Transverse colon (tissue), 4 donors: ENCODE measurements at regions of chr11 and their contacts with region 1.

Region 1: DNA sequence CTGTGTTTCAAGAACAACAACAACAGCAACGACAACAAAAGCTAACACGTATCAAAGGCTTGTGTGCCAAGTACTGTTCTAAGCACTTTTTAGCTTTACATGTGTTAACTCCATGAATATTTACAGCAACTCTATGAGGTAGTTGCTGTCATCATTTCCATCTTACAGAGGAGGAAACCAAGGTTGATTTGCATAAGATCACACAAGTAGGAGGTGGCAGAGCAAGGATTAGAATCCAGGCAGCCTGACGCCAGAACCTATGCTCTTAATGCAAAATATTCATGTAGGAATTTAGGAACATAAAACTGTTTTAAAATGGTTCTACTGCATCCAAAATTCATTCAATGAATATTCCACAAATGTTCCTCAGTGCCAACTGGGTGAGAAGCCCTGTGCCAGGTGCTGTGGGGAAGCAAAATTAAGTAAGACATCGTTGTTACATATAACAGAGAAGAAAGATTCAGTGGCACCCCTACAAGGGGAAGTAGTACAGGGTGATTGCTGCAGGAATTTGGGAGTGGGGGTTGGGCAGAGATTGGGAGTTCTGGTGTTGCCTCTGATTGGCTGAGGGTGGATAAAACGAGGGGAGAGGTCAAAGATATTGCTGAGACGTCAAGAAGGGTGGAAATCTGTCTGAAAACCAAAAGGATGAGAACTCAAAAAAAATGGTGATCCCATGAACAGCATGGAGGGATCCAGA is 86.1 kb upstream of the ARHGAP20 start:
- DNase-seq: no peak
- H3K4me3 ChIP-seq: no peak overlapping the region
- H3K27ac ChIP-seq: no peak overlapping the region
- H3K4me1 ChIP-seq: no peaks in the 10 kb centered on the region
- H3K27me3 ChIP-seq: no peaks in the 10 kb centered on the region
- CTCF ChIP-seq: no peak
- EP300 ChIP-seq: no peak
- POLR2A ChIP-seq: no peak

Region 2: DNA sequence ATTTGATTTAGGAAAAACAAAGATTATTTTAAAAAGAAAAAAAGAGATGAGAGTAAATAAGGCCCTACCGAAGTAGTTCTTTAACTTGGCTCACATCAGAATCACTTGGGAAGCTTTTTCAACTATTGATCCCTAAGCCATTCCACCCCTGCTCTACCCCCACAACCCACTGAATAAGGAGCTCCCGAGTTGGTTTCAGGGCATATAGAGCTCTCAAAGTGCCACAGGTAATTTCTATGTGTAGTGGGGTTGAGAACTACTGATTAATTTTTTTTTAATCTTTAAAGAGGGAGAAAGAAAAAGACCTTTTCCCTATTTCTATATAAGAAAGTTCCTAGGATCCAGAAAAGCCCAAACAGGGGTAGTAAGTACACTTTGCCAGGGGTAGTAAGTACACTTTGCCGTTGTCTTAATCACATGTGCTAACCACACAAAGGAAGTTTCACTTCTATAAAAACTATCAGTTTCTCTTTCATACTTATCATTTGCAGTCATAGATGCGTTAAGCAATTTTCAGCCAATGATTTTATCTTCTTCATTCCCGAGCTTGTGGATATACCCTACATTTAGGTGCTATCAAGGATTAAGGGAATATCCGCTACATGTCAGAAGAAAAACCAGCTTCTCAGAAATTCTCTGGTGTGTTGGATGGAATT is 813.6 kb before region 1 on chr11:
- in situ Hi-C with region 1: no loop called
- intact Hi-C with region 1: no loop called
- DNase-seq: no peak
- H3K4me3 ChIP-seq: no peak overlapping the region
- H3K27ac ChIP-seq: no peak overlapping the region
- H3K4me1 ChIP-seq: no peaks in the 10 kb centered on the region
- H3K27me3 ChIP-seq: no peaks in the 10 kb centered on the region
- CTCF ChIP-seq: no peak
- EP300 ChIP-seq: no peak
- POLR2A ChIP-seq: no peak

Region 3: DNA sequence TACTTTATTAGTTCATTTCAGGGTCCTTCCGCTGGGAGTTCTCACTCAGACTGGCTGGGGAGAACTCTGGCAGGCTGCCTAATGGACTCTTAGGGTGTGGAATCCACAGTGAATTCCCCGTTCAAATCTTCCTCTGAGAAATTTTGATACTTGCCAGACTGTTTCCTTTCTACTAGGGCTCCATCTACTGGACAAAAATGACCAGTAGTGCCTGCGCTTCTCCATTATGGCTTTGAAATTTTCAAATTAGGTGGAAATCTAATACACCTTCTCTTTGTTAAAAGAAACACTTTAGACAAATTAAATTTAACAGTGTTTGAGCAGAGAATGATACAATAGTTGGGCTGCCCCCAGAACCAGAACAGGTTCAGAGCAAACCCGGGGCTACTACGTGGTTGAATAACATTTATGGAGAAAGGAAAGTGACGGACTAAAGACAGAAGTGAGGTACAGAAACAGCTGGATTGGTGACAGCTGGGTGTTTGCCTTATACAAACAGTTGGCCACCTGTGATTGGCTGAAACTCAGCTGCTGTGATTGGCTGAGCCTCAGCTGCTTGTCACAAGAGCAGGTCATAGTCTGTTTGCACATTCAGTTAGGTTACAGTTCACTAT is 421.5 kb before region 1 on chr11:
- in situ Hi-C with region 1: no loop called
- intact Hi-C with region 1: no loop called
- DNase-seq: peak; percentile 68
- H3K4me3 ChIP-seq: peak overlapping the region in 1 of 4 donors; percentile 9
- H3K27ac ChIP-seq: peak overlapping the region in 3 of 4 donors; percentile 26 to 68 (median 48)
- H3K4me1 ChIP-seq: peaks cover 0 to 11% (median 9%) of the 10 kb centered on the region in 4 donors
- H3K27me3 ChIP-seq: no peaks in the 10 kb centered on the region
- CTCF ChIP-seq: peak; percentile 68 to 79 (median 74)
- EP300 ChIP-seq: no peak
- POLR2A ChIP-seq: no peak

Region 4: GRCh38 chr11:110679323-110679975 is 118.9 kb before region 1 on chr11:
- in situ Hi-C with region 1: no loop called
- intact Hi-C with region 1: loop called (anchors 2 kb)
- DNase-seq: no peak
- H3K4me3 ChIP-seq: no peak overlapping the region
- H3K27ac ChIP-seq: no peak overlapping the region
- H3K4me1 ChIP-seq: no peaks in the 10 kb centered on the region
- H3K27me3 ChIP-seq: no peaks in the 10 kb centered on the region
- CTCF ChIP-seq: no peak
- EP300 ChIP-seq: no peak
- POLR2A ChIP-seq: no peak